ENCODE measurements at regions of chr20 and their contacts with region 1.

Region 1: GRCh38 chr20:34129518-34130162 is 17.6 kb upstream of the EIF2S2 start:
- DNase-seq: peak; percentile 47
- ATAC-seq: peak; percentile 96
- H3K4me3 ChIP-seq: peak overlapping the region in 1 of 2 experiments; percentile 32; a peak in 2 of 4 replicates
- H3K27ac ChIP-seq: no peak overlapping the region
- H3K4me1 ChIP-seq: no peaks in the 10 kb centered on the region
- H3K27me3 ChIP-seq: no peaks in the 10 kb centered on the region
- CTCF ChIP-seq: peak; percentile 88

Region 2: GRCh38 chr20:33753763-33754162 is 375.9 kb before region 1 on chr20:
- CTCF ChIA-PET with region 1: interaction called, 10 read pairs
- POLR2A ChIA-PET with region 1: no interaction called
- in situ Hi-C with region 1: no loop called
- intact Hi-C with region 1: no loop called
- DNase-seq: no peak
- ATAC-seq: no peak
- H3K4me3 ChIP-seq: no peak overlapping the region
- H3K27ac ChIP-seq: no peak overlapping the region
- H3K4me1 ChIP-seq: no peaks in the 10 kb centered on the region
- H3K27me3 ChIP-seq: no peaks in the 10 kb centered on the region
- CTCF ChIP-seq: no peak

Region 3: DNA sequence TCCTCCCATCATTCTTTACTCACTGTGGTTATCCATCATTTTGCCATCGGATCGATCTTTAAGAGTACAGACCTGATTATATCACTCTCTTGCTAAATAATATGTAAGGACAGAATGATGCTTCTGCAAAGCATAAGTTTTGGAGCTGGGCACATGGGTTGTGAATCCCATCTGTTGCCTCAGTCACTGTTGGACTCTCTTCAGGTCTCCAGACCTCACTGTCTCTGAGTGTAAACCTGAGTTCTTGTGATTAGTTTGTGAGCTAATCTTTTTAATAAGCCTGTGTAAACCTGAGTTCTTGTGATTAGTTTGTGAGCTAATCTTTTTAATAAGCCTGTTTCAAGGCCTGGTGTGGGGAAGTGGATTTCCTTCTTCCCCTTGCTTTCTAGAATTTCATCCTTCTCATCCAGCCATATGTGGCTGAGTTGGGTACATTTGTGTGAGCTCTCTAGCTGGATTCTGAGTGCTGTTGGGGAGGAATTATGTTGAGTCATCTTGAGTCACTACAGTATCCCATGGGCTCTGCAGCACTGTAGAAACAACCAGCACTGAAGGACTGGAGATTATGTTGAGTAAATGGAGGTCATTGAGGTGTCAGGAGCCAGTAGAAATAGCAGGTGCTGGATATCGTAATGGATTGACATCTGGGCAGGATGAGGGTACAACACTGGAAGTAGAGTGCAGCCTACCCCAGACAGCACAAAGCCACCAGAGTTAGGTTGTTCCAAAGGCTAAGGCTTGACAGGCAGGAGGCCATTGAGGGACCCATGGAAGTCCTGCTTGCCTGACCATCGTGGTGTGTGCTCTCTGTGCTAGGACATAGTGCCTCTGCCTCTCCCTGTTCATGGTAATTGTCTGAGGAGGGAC is 1772.3 kb after region 1 on chr20:
- CTCF ChIA-PET with region 1: interaction called, 10 read pairs
- POLR2A ChIA-PET with region 1: no interaction called
- in situ Hi-C with region 1: no loop called
- intact Hi-C with region 1: no loop called
- DNase-seq: peak; percentile 60
- ATAC-seq: peak; percentile 94
- H3K4me3 ChIP-seq: no peak overlapping the region
- H3K27ac ChIP-seq: no peak overlapping the region
- H3K4me1 ChIP-seq: peaks cover 6% of the 10 kb centered on the region; the same call in 1 of the 2 replicates
- H3K27me3 ChIP-seq: no peaks in the 10 kb centered on the region
- CTCF ChIP-seq: no peak